ENCODE measurements at regions of chr2 and their contacts with region 1.

Region 1: DNA sequence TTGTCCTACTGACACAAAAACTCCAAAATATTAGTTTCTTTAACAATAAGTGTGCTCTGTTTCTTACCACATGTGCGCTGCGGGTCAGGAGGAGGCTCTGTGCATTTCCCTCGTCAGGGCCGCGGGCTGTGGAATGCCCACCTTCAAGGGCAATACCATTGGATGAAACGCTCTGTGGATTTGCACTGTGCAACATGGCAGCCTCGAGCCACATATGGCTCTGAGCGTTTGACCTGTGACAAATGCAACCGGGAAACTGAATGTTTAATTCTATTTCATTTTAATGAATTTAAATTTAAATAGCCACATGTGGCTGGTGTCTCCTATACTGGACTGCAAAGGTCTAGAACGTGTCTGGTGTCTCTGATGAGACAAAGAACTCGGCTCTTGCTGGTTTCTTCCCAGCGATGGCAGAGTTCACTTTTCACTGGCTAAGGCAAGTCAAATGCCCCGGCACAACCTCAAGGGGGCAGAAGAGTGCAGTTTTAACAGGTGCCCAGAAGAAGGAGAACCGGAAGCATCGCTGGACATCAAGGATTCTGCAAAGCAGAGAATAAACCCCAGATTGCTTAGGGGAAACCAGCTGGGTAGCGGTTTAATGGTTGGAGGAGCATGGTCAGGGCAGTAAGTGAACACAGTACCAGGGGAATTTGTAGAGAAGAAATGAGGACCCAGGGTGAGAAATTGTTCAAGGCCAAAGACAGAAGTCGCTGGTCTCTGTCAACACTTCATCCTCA is 37.0 kb upstream of the TMEM18 start:
- DNase-seq: peak; percentile 25 to 50 (median 29)
- H3K4me3 ChIP-seq: no peak overlapping the region
- H3K4me3 Mint-ChIP-seq: no peak overlapping the region
- H3K27ac ChIP-seq: no peak overlapping the region
- H3K27ac Mint-ChIP-seq: no peak overlapping the region
- H3K4me1 ChIP-seq: no peaks in the 10 kb centered on the region
- H3K4me1 Mint-ChIP-seq: no peaks in the 10 kb centered on the region
- H3K27me3 ChIP-seq: no peaks in the 10 kb centered on the region
- H3K27me3 Mint-ChIP-seq: peaks cover 5 to 12% (median 10%) of the 10 kb centered on the region in 3 donors
- CTCF ChIP-seq: peak; percentile 67

Region 2: DNA sequence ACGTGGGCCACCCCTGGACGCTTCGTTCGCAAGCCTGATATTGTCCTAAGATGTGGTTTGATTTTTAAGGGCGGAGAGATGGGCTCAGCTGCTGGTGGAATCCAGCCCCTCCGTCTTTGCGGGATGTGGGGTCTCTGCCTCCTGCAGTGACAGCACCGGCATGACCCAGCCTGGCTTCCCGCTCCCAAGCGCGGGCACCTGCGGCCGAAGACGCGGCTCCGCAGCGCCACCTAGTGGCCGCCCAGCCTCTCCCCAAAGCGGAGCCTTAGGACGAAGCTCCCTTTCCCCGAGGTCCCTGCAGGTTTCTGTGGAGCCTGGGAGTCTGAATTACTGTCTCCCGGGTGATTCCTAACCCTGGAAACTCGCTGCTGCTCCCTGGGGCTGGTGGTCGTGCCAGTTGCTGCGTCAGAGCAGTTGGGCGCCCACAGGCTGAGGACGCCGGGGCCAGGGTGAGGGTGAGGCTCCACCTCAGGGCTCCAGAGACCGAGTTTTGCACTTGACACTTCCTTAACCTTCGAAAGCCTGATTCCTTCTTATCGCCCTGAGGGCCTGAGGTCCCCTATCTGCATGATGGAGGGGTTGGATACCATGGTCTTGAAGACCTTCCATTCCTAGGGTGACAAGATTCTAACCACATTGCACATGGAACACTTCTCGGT is 836.6 kb after region 1 on chr2:
- intact Hi-C with region 1: loop called in 1 of 2 experiments (anchors 5 kb)
- DNase-seq: peak; percentile 4 to 25 (median 11)
- H3K4me3 ChIP-seq: no peak overlapping the region
- H3K4me3 Mint-ChIP-seq: no peak overlapping the region
- H3K27ac ChIP-seq: no peak overlapping the region
- H3K27ac Mint-ChIP-seq: no peak overlapping the region
- H3K4me1 ChIP-seq: no peaks in the 10 kb centered on the region
- H3K4me1 Mint-ChIP-seq: no peaks in the 10 kb centered on the region
- H3K27me3 ChIP-seq: no peaks in the 10 kb centered on the region
- H3K27me3 Mint-ChIP-seq: peaks cover 6 to 14% (median 12%) of the 10 kb centered on the region in 3 donors
- CTCF ChIP-seq: peak; percentile 99

Measured in CD14-positive monocyte (primary cell).